CD4-positive, alpha-beta T cell (primary cell): ENCODE measurements at regions of chr3 and their contacts with region 1.

Region 1: DNA sequence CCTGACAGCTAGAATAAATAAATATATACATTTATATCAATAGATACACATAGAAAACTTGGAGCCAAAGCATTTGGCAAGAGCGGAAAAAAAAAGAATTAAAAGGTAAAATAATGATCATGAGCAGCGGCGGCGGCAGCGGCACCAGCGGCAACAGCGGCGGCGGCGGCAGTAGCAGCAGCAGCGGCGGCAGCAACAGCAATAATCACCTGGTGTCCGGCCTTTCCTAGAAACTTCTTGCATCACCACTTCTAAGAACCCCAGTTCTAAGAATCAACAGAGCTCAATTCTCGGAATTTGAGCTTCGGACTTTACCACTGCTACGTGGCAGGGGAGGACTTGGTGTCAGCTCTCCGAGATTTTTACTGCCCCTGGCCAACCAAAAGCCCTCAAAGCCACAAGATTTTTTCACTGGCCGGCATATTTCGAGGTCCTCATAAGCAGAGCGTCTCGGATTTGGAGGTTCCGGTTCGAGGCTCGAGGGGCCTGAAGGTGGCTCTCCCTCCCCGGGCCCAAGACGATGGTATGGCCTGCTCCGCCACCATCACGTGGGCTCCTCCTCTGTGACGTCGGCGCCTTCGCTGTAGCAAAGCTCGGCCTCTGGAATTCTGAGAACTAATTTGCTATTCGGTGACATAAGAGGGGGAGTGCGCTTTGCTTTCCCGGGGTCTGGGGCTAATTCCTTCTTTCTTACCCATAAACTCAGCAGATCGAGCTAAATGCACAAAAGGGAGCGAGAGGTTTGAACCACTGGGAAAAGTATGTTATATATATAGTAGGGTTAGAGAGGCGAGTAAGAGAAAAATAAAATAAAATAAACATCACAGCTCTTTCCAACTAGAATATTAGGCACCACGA is at the start of gene BCL6:
- DNase-seq: peak; percentile 66 to 96 (median 82)
- ATAC-seq: peak; percentile 64
- H3K4me3 ChIP-seq: peak within 1 kb of the TSS; percentile 96
- H3K4me3 Mint-ChIP-seq: peak within 1 kb of the TSS; percentile 100
- H3K27ac ChIP-seq: peak within 1 kb of the TSS; percentile 95 to 99
- H3K27ac Mint-ChIP-seq: peak within 1 kb of the TSS; percentile 99
- H3K4me1 ChIP-seq: peaks cover 49% of the 10 kb centered on the region
- H3K4me1 Mint-ChIP-seq: peaks cover 85% of the 10 kb centered on the region
- H3K27me3 ChIP-seq: no peaks in the 10 kb centered on the region
- H3K27me3 Mint-ChIP-seq: no peaks in the 10 kb centered on the region
- CTCF ChIP-seq: no peak
- total RNA-seq, gene BCL6: 76.6 to 79.6 TPM

Region 2: DNA sequence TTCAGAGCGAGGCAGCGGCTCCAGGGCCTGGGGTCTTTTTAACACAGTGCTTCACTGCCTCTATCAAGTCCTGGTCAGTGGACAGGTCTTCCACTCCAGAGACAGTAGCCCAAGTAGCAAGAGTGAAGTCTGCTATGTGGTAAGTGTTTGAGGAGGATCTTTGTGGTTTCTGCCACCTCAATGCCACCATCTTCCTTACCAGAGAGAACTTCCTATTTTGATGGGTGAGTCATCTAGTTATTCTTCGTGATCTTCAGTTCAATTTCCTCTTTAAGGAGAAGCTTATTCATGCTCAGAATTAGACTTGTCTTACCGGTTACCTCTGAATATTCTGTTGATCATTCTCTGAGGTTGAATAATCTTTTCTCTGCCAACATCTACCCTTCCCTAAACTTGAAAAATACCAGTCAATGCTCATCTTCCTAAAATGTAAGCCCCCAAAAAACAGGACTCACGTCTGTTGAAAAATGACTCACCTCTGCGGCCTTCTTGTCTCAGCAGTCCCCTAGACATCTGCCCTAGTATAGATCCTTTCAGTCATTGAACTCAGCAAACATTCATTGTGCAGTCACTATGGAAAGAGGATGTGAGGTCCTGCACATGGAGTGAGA is 32.0 kb after region 1 on chr3:
- CTCF ChIA-PET with region 1: interaction called, 6 read pairs
- POLR2A ChIA-PET with region 1: interaction called, 8 read pairs
- intact Hi-C with region 1: loop called in 1 of 2 experiments (anchors 2 kb)
- DNase-seq: peak in 7 of 14 experiments; percentile 14 to 86 (median 43)
- ATAC-seq: peak; percentile 87
- H3K4me3 ChIP-seq: no peak overlapping the region
- H3K4me3 Mint-ChIP-seq: peak overlapping the region; percentile 9
- H3K27ac ChIP-seq: peak overlapping the region in 1 of 2 donors; percentile 31
- H3K27ac Mint-ChIP-seq: peak overlapping the region; percentile 72
- H3K4me1 ChIP-seq: peaks cover 26% of the 10 kb centered on the region
- H3K4me1 Mint-ChIP-seq: peaks cover 26% of the 10 kb centered on the region
- H3K27me3 ChIP-seq: no peaks in the 10 kb centered on the region
- H3K27me3 Mint-ChIP-seq: no peaks in the 10 kb centered on the region
- CTCF ChIP-seq: no peak

Region 3: GRCh38 chr3:187968883-187969580 is 223.6 kb after region 1 on chr3:
- CTCF ChIA-PET with region 1: interaction called, 13 read pairs
- POLR2A ChIA-PET with region 1: interaction called, 17 read pairs
- intact Hi-C with region 1: loop called (anchors 2 to 5 kb)
- DNase-seq: peak in 2 of 14 experiments; percentile 43 to 50
- ATAC-seq: no peak
- H3K4me3 ChIP-seq: no peak overlapping the region
- H3K4me3 Mint-ChIP-seq: no peak overlapping the region
- H3K27ac ChIP-seq: no peak overlapping the region
- H3K27ac Mint-ChIP-seq: no peak overlapping the region
- H3K4me1 ChIP-seq: peaks cover 3% of the 10 kb centered on the region
- H3K4me1 Mint-ChIP-seq: peaks cover 12% of the 10 kb centered on the region
- H3K27me3 ChIP-seq: no peaks in the 10 kb centered on the region
- H3K27me3 Mint-ChIP-seq: no peaks in the 10 kb centered on the region
- CTCF ChIP-seq: no peak

Region 4: GRCh38 chr3:188154014-188154808 is 408.8 kb after region 1 on chr3 and contains the start of gene LPP:
- CTCF ChIA-PET with region 1: interaction called, 32 read pairs
- POLR2A ChIA-PET with region 1: interaction called, 28 read pairs
- intact Hi-C with region 1: loop called (anchors 2 kb)
- DNase-seq: peak; percentile 60 to 94 (median 76)
- ATAC-seq: peak; percentile 83
- H3K4me3 ChIP-seq: peak within 1 kb of the TSS; percentile 87
- H3K4me3 Mint-ChIP-seq: peak within 1 kb of the TSS; percentile 96
- H3K27ac ChIP-seq: peak within 1 kb of the TSS; percentile 76 to 85
- H3K27ac Mint-ChIP-seq: peak within 1 kb of the TSS; percentile 91
- H3K4me1 ChIP-seq: peaks cover 46% of the 10 kb centered on the region
- H3K4me1 Mint-ChIP-seq: peaks cover 57% of the 10 kb centered on the region
- H3K27me3 ChIP-seq: no peaks in the 10 kb centered on the region
- H3K27me3 Mint-ChIP-seq: no peaks in the 10 kb centered on the region
- CTCF ChIP-seq: no peak
- total RNA-seq, gene LPP: 45.6 to 45.9 TPM

Region 5: GRCh38 chr3:188954590-188955208 is 1209.3 kb after region 1 on chr3:
- CTCF ChIA-PET with region 1: interaction called, 80 read pairs
- POLR2A ChIA-PET with region 1: interaction called, 54 read pairs
- intact Hi-C with region 1: loop called in 1 of 2 experiments (anchors 1 kb)
- DNase-seq: peak; percentile 51 to 85 (median 64)
- ATAC-seq: peak; percentile 78
- H3K4me3 ChIP-seq: no peak overlapping the region
- H3K4me3 Mint-ChIP-seq: no peak overlapping the region
- H3K27ac ChIP-seq: no peak overlapping the region
- H3K27ac Mint-ChIP-seq: no peak overlapping the region
- H3K4me1 ChIP-seq: peaks cover 2% of the 10 kb centered on the region
- H3K4me1 Mint-ChIP-seq: no peaks in the 10 kb centered on the region
- H3K27me3 ChIP-seq: no peaks in the 10 kb centered on the region
- H3K27me3 Mint-ChIP-seq: peaks cover 9% of the 10 kb centered on the region
- CTCF ChIP-seq: peak; percentile 80